Activated B cell treated with CpG ODN at 0.5 μM for 24 hours (primary cell): ENCODE measurements at regions of chr12 and their contacts with region 1.

Region 1: DNA sequence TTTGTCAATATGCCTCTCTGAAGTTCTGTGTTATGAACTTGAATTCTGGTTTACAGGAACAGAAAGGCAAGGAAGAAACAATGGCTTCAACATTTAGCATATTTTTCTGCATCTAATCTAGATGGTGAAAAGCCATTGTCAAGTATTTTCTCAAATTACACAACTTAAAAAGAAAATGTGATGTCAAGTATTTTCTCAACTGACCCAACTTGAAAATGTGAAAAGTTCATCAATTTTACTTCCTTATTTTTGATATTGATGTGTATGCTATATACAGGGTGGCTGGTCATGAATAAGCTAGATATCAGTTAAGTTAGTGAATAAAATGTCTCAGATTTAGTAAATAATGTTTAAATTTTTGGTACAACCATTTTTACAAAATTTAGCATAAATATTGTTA is 196.7 kb downstream of the ALX1 start:
- DNase-seq: no peak
- ATAC-seq: no peak
- H3K4me3 Mint-ChIP-seq: no peak overlapping the region
- H3K27ac Mint-ChIP-seq: no peak overlapping the region
- H3K4me1 Mint-ChIP-seq: no peaks in the 10 kb centered on the region
- H3K27me3 Mint-ChIP-seq: no peaks in the 10 kb centered on the region
- CTCF ChIP-seq: no peak

Region 2: DNA sequence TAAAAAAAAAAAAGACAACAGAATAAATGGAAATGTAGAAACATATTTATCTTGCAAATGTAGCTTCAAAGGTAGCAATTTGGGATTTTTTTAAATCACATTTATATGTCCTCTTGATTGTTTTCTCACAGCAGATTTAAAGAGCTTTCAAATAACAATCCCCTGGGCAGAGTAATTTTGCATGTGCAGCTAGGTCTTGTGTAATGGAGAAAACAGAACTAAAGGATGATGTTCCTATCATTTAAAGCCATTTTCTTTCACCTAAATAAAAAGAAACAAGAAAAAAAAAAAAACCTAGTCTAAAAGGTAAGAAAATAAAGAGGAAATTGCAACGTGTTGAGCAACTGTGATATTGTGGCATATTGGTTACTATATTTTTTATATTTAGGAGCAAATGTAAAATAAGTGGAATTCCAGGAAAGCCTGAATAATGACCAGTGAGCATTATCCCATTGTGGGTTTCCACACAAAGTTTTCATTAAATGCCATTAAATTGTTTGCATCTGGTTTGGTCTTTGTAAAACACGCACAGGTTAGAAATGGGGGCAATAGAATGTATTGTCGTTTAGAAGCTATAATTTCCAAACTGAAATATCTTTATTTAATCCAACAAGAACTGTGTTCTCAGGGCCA is 779.7 kb before region 1 on chr12:
- CTCF ChIA-PET with region 1: no interaction called
- POLR2A ChIA-PET with region 1: no interaction called
- intact Hi-C with region 1: no loop called
- DNase-seq: no peak
- ATAC-seq: no peak
- H3K4me3 Mint-ChIP-seq: no peak overlapping the region
- H3K27ac Mint-ChIP-seq: no peak overlapping the region
- H3K4me1 Mint-ChIP-seq: no peaks in the 10 kb centered on the region
- H3K27me3 Mint-ChIP-seq: no peaks in the 10 kb centered on the region
- CTCF ChIP-seq: no peak

Region 3: GRCh38 chr12:85504164-85504563 is 27.4 kb after region 1 on chr12:
- CTCF ChIA-PET with region 1: no interaction called
- POLR2A ChIA-PET with region 1: no interaction called
- intact Hi-C with region 1: no loop called
- DNase-seq: no peak
- ATAC-seq: no peak
- H3K4me3 Mint-ChIP-seq: no peak overlapping the region
- H3K27ac Mint-ChIP-seq: no peak overlapping the region
- H3K4me1 Mint-ChIP-seq: peaks cover 3% of the 10 kb centered on the region
- H3K27me3 Mint-ChIP-seq: no peaks in the 10 kb centered on the region
- CTCF ChIP-seq: no peak

Region 4: GRCh38 chr12:85866986-85867776 is 390.4 kb after region 1 on chr12:
- CTCF ChIA-PET with region 1: no interaction called
- POLR2A ChIA-PET with region 1: no interaction called
- intact Hi-C with region 1: loop called (anchors 1 kb)
- DNase-seq: no peak
- ATAC-seq: no peak
- H3K4me3 Mint-ChIP-seq: no peak overlapping the region
- H3K27ac Mint-ChIP-seq: no peak overlapping the region
- H3K4me1 Mint-ChIP-seq: no peaks in the 10 kb centered on the region
- H3K27me3 Mint-ChIP-seq: no peaks in the 10 kb centered on the region
- CTCF ChIP-seq: no peak